CD4-positive, alpha-beta memory T cell (primary cell): ENCODE measurements at regions of chr1 and their contacts with region 1.

Region 1: DNA sequence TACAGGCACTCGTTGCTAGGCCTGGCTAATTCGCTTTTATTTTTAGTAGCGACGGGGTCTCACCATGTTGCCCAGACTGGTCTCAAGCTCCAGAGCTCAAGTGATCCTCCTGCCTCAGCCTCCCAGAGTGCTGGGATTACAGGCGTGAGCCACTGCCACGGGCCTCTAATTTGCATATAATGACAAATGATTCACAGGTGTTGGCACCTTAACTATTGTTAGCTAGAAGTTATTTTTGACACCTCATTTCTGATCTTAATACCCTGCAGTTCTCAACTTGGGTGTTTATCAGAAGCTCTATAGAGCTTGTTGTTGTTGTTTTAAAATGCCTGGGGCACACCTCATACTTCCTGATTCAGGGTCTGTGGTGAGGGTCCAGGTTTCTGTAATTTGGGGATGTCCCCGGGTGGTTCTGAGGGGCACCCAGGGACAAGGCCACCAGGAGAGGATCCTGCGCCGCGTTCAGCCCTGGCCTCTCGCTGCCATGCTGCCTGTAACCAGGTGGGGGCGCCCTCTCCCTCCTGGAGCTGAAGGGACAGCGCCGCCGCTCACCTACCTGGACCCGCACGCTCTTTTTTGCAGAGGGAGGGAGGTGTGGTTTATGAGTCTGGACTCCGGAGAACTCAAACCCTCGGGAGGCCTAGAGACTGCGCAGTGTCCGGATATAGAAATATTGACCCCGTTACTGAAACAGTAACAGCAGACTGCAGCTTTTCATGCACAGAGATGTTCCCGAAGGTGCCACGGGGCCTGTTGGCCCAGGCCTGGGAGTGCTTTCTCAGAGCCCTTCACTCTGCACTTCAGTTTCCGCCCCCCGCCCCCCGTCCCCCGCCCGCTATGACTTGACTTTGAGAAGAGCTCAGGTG is 23.0 kb upstream of the NEK2 start:
- DNase-seq: peak; percentile 72 to 81 (median 73)
- H3K4me3 ChIP-seq: peak overlapping the region in 1 of 2 donors; percentile 30
- H3K4me3 Mint-ChIP-seq: peak overlapping the region; percentile 66 to 82 (median 78)
- H3K27ac ChIP-seq: no peak overlapping the region
- H3K27ac Mint-ChIP-seq: no peak overlapping the region
- H3K4me1 ChIP-seq: peaks cover 21% of the 10 kb centered on the region
- H3K4me1 Mint-ChIP-seq: peaks cover 8 to 26% (median 19%) of the 10 kb centered on the region in 4 donors
- H3K27me3 ChIP-seq: no peaks in the 10 kb centered on the region
- H3K27me3 Mint-ChIP-seq: peaks cover 0 to 3% of the 10 kb centered on the region in 2 donors

Region 2: DNA sequence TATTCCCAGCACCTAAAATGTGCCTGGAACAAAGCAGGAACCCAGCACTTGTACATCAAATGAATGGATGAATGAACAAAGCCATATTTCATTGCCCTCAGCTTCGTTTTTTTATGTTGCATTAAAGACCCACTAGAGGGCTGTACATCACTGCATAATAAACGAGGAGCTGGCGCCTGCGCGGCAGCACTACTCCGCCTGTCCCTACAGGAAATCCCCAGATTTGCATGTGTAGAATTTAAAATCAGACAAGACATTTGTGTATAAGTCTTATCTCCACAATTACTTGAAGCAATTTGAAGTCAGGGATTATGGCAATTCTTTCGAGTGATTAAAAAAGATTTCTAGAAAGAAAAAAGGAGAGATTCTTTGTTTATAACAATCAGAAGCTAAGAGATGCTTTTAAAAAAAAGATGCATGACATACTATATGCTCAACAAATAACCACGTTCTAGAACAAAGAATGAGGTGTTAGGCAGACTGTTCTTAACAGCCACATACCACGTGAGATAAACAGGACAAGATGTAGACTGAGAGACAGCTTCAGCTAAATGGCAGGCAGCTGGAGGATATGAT is 17.6 kb before region 1 on chr1:
- CTCF ChIA-PET with region 1: interaction called, 83 read pairs
- POLR2A ChIA-PET with region 1: interaction called, 3 read pairs
- intact Hi-C with region 1: no loop called
- DNase-seq: peak; percentile 76 to 83 (median 82)
- H3K4me3 ChIP-seq: no peak overlapping the region
- H3K4me3 Mint-ChIP-seq: peak overlapping the region in 4 of 8 donors; percentile 0 to 56 (median 17)
- H3K27ac ChIP-seq: peak overlapping the region; percentile 61
- H3K27ac Mint-ChIP-seq: peak overlapping the region; percentile 77 to 98 (median 92)
- H3K4me1 ChIP-seq: peaks cover 15% of the 10 kb centered on the region
- H3K4me1 Mint-ChIP-seq: peaks cover 9 to 26% (median 12%) of the 10 kb centered on the region in 4 donors
- H3K27me3 ChIP-seq: no peaks in the 10 kb centered on the region
- H3K27me3 Mint-ChIP-seq: no peaks in the 10 kb centered on the region

Region 3: DNA sequence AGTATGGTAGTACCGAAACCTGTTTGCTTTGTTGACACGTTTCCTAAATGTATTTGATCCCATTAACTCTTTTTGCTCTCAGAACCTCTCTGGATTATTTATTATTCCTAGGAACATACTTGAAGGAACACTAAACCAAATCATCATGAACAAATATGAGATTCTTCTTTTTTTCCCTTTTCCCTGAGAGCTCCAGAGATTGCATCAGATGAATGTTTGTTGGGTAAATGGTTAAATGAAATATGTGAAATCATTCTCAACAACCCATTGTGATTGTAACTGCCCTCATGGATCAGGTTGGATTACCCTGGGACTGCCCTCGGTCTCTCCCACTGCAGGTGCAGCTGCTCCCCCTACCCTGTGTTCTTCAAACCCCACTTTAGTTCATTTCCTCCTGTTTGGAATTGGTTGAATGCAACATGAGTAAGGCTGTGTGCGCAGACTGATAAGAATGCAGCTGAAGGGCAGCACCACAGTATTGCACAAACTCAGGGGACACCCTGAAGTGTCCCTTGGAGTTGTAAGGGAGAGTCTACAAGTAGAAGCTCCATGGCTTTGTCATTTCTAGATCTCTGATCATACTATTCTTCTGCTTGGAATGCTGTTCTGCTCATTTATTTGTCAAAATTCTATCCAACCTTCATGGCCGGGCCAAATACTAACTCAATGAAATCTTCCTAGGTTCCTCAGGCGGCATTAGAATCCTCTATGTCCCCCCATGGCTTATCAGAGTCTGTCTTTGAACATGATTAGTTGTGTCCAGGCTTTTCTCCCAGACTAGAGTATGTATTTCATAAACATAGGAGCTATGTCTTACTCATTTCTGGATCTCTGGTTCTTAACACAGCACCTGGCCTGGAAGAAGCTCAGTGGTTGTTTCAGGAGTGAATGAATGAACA is 24.1 kb after region 1 on chr1:
- CTCF ChIA-PET with region 1: interaction called, 13 read pairs
- POLR2A ChIA-PET with region 1: no interaction called
- intact Hi-C with region 1: no loop called
- DNase-seq: no peak
- H3K4me3 ChIP-seq: no peak overlapping the region
- H3K4me3 Mint-ChIP-seq: no peak overlapping the region
- H3K27ac ChIP-seq: no peak overlapping the region
- H3K27ac Mint-ChIP-seq: no peak overlapping the region
- H3K4me1 ChIP-seq: no peaks in the 10 kb centered on the region
- H3K4me1 Mint-ChIP-seq: no peaks in the 10 kb centered on the region
- H3K27me3 ChIP-seq: no peaks in the 10 kb centered on the region
- H3K27me3 Mint-ChIP-seq: peaks cover 0 to 2% of the 10 kb centered on the region in 2 donors

Region 4: GRCh38 chr1:211738691-211739301 is 40.4 kb after region 1 on chr1:
- CTCF ChIA-PET with region 1: interaction called, 19 read pairs
- POLR2A ChIA-PET with region 1: no interaction called
- intact Hi-C with region 1: loop called (anchors 10 kb)
- DNase-seq: peak; percentile 6 to 33 (median 13)
- H3K4me3 ChIP-seq: peak overlapping the region in 1 of 2 donors; percentile 11
- H3K4me3 Mint-ChIP-seq: peak overlapping the region; percentile 16 to 88 (median 70)
- H3K27ac ChIP-seq: no peak overlapping the region
- H3K27ac Mint-ChIP-seq: peak overlapping the region; percentile 40 to 92 (median 81)
- H3K4me1 ChIP-seq: peaks cover 32% of the 10 kb centered on the region
- H3K4me1 Mint-ChIP-seq: peaks cover 26 to 43% (median 33%) of the 10 kb centered on the region in 4 donors
- H3K27me3 ChIP-seq: no peaks in the 10 kb centered on the region
- H3K27me3 Mint-ChIP-seq: no peaks in the 10 kb centered on the region

Region 5: GRCh38 chr1:211761400-211761799 is 63.0 kb after region 1 on chr1:
- CTCF ChIA-PET with region 1: interaction called, 12 read pairs
- POLR2A ChIA-PET with region 1: no interaction called
- intact Hi-C with region 1: no loop called
- DNase-seq: no peak
- H3K4me3 ChIP-seq: no peak overlapping the region
- H3K4me3 Mint-ChIP-seq: no peak overlapping the region
- H3K27ac ChIP-seq: no peak overlapping the region
- H3K27ac Mint-ChIP-seq: no peak overlapping the region
- H3K4me1 ChIP-seq: no peaks in the 10 kb centered on the region
- H3K4me1 Mint-ChIP-seq: no peaks in the 10 kb centered on the region
- H3K27me3 ChIP-seq: no peaks in the 10 kb centered on the region
- H3K27me3 Mint-ChIP-seq: no peaks in the 10 kb centered on the region

Region 6: DNA sequence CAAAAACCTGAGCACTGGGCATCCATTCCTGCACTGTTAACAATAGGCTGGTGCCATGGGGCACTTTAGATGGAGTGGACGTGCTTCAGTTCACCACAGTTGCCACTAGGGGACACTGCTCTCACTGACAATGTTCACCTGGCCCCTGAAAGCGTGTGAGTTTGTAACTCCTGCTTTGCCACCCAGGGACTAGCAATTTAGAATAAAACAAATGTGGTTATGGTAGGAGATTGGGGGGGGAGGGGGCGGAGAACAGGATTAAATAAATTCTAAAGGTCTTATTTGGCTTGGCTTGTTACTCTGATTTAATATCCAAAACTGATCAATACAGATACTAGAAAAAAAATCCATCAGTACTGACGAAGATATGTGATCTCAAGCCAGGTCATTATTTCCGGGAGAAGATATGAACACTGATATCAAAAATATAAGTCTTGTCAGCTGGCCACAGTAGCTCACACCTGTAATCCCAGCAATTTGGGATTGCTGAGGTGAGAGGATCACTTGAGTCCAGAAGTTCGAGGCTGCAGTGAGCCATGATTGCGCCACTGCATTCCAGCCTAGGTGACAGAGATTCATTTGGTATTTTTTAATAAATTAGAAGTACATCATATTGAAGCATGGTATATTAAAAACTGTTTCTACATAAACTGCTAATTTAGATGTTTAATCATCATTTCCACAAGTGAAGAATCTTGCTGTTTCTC is 313.8 kb after region 1 on chr1:
- CTCF ChIA-PET with region 1: interaction called, 6 read pairs
- POLR2A ChIA-PET with region 1: no interaction called
- intact Hi-C with region 1: loop called (anchors 1 kb)
- DNase-seq: peak; percentile 42 to 66 (median 53)
- H3K4me3 ChIP-seq: no peak overlapping the region
- H3K4me3 Mint-ChIP-seq: no peak overlapping the region
- H3K27ac ChIP-seq: no peak overlapping the region
- H3K27ac Mint-ChIP-seq: peak overlapping the region in 1 of 7 donors; percentile 3
- H3K4me1 ChIP-seq: no peaks in the 10 kb centered on the region
- H3K4me1 Mint-ChIP-seq: peaks cover 0 to 7% (median 4%) of the 10 kb centered on the region in 4 donors
- H3K27me3 ChIP-seq: no peaks in the 10 kb centered on the region
- H3K27me3 Mint-ChIP-seq: no peaks in the 10 kb centered on the region